HepG2 (cell line): ENCODE measurements at regions of chr14 and their contacts with region 1.

Region 1: GRCh38 chr14:105974902-105975301 is 448.5 kb downstream of the TMEM121 start:
- DNase-seq: peak; percentile 39
- ATAC-seq: peak; percentile 77
- H3K4me3 ChIP-seq: no peak overlapping the region
- H3K27ac ChIP-seq: no peak overlapping the region
- H3K4me1 ChIP-seq: no peaks in the 10 kb centered on the region
- H3K27me3 ChIP-seq: peaks cover 0 to 6% of the 10 kb centered on the region in 2 experiments; a peak in 2 of 5 replicates
- CTCF ChIP-seq: peak; percentile 51
- EP300 ChIP-seq: no peak
- POLR2A ChIP-seq: no peak
- RAD21 ChIP-seq: no peak

Region 2: DNA sequence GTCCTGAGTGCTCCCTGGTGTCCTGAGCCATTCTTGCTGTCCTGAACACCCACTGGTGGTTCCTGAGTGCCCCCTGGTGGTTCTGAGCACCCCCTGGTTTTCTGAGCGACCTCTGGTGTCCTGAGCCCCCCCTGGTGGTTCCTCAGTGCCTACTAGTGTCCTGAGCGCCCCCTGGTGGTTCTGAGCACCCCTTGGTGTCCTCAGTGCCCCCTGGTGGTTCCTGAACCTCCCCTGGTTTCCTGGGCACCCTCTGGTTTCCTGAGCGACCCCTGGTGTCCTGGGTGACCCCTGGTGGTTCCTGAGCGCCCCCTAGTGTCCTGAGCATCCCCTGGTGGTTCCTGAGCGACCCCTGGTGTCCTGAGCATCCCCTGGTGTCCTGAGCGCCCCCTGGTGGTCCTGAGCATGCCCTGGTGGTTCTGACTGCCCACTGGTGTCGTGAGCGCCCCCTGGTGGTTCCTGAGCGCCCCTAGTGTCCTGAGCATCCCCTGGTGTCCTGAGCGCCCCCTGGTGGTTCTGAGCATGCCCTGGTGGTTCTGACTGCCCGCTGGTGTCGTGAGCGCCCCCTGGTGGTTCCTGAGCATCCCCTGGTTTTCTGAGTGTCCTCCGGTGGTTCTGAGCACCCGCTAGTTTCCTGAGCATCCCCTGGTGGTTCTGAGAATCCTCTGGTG is 24.6 kb after region 1 on chr14:
- CTCF ChIA-PET with region 1: interaction called, 14 read pairs
- POLR2A ChIA-PET with region 1: no interaction called
- in situ Hi-C with region 1: no loop called
- intact Hi-C with region 1: no loop called
- DNase-seq: peak; percentile 50
- ATAC-seq: no peak
- H3K4me3 ChIP-seq: no peak overlapping the region
- H3K27ac ChIP-seq: no peak overlapping the region
- H3K4me1 ChIP-seq: no peaks in the 10 kb centered on the region
- H3K27me3 ChIP-seq: no peaks in the 10 kb centered on the region; a peak in 1 of 5 replicates
- CTCF ChIP-seq: peak; percentile 31; the same call in 1 of the 2 replicates
- EP300 ChIP-seq: no peak
- POLR2A ChIP-seq: no peak
- RAD21 ChIP-seq: no peak